ENCODE measurements at regions of chr18 and their contacts with region 1.

Region 1: GRCh38 chr18:72819050-72819449 is 48.7 kb downstream of the NETO1 start:
- DNase-seq: no peak

Region 2: DNA sequence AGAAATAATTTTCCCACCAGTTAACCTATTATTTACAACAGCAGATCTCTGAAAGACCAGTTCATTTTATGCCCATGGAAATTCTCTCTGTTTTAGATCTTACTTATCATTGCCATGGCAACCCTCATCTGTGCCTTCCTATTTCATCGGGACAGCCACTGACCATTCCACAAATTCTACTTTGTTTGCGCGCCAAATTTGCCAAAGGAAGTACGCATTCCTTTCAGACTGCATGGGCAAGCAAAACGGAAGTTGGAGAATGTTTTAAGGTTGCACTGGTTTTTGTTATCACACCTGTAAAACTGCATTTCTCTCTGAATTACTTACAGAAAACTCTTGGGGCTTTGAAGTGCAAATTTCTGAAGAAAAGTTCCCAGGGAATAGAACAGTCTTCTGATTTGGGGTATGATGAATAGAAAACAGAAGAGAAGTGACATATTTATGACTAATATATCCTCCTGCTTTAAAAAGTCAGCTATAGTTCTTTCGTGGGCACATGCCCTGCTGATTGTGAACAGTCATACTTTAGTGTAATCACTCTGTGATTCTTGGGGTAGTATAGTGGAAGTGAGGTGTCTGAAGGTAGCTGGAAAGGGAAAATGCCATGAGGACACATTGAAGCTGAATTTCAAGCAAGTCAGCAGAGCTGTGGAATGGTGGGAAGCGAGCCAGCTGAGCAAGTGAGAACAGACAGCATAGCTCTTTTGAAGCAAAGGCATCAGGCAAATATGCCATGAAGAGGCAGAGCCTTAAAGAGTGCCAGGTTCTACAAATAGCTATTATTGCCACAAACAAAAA is 27.9 kb after region 1 on chr18:
- intact Hi-C with region 1: loop called in 1 of 2 experiments (anchors 1 kb)
- DNase-seq: no peak

Region 3: DNA sequence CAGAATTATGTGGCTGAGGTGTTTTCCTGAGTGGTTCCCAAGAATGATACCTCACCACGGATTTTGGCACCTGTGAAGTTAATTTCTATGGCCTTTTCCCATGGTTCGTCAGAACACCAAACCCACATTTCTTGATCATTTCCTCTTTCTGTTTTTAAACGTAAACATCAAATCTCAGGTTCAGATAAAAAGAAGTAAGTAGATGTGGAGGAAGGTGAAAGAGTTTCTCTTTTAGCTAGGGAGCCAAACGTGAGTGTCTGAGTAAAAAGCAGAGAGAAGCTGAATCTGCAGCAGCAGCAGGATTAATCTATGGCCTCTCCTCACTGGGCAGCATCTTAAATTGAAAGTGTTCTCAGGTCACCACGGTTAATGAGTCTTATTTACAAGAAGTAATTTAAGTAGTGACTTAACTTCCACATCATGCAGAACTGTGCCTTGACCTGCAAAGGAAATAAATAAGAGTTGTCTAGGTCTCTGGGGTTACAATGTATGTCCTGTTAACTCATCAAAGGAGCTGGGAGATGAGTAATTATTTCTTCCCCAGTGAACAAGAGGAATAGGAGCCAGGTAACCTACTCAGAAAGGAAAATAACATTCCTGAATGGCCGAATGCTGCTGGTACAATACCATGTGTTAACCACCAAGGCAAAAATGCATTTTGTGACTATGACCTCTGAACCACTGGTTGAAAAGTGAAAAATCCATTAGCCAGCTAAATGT is 188.3 kb after region 1 on chr18:
- intact Hi-C with region 1: no loop called
- DNase-seq: no peak

Region 4: GRCh38 chr18:73407506-73407905 is 588.5 kb after region 1 on chr18:
- intact Hi-C with region 1: no loop called
- DNase-seq: no peak